CD14-positive monocyte (primary cell): ENCODE measurements at regions of chr12 and their contacts with region 1.

Region 1: GRCh38 chr12:124767066-124767821 is 96.4 kb downstream of the SCARB1 start:
- DNase-seq: peak; percentile 76 to 80 (median 79)
- H3K4me3 ChIP-seq: no peak overlapping the region
- H3K4me3 Mint-ChIP-seq: peak overlapping the region in 1 of 2 donors; percentile 12
- H3K27ac ChIP-seq: peak overlapping the region; percentile 77 to 82
- H3K27ac Mint-ChIP-seq: peak overlapping the region; percentile 80 to 95 (median 89)
- H3K4me1 ChIP-seq: peaks cover 78 to 81% of the 10 kb centered on the region in 2 donors
- H3K4me1 Mint-ChIP-seq: peaks cover 82% of the 10 kb centered on the region
- H3K27me3 ChIP-seq: no peaks in the 10 kb centered on the region
- H3K27me3 Mint-ChIP-seq: peaks cover 2 to 10% (median 5%) of the 10 kb centered on the region in 3 donors
- CTCF ChIP-seq: peak; percentile 100

Region 2: DNA sequence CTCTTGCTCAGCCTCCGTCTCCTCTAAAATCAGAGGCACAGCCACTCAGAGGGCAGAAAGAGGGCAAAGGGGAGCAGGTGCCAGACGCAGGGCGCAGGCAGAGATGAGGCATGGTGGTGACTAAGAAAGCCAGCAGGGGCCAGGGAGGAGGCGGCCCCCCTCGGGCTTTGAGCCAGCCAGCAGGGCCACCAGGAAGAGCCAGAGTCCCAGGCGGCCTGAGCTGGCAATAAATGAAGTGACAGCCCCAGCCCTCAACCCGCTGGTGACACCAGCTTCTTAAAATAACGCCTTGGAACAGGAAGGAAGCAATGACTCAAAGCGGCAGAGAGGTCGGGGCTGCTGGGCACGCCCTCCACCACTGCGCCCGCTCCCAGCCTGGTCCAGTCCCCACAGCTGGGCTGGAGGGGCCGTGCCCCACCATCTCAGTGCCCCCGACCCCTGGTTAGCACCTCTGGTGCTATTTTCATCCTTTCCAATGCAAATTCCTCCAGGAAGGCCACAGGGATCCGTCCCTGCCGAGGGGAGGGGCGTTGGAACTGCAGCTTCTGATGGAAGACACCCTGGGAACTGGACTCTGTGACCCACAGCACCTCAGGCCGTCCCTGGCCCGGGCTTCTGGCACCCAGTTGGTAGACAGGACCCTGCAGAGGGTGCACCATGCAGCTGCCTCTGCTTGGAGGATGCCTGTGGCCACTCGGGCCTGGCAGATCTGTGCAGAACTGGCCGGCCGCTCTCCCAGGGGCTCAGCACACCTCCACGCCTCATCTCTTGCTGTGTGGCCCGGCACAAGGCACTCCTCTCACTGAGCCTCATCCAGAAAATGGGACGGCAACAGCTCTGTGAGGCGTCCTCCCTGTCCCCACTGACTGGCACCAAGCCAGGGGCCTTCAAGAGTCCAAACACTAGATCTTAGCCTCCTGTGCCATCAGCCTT is 313.6 kb before region 1 on chr12:
- intact Hi-C with region 1: loop called in 1 of 2 experiments (anchors 5 kb)
- DNase-seq: peak; percentile 98 to 99 (median 99)
- H3K4me3 ChIP-seq: peak overlapping the region in 1 of 3 experiments; percentile 47
- H3K4me3 Mint-ChIP-seq: peak overlapping the region; percentile 65 to 67
- H3K27ac ChIP-seq: peak overlapping the region; percentile 73 to 85
- H3K27ac Mint-ChIP-seq: peak overlapping the region; percentile 78 to 95 (median 90)
- H3K4me1 ChIP-seq: peaks cover 64 to 67% of the 10 kb centered on the region in 2 donors
- H3K4me1 Mint-ChIP-seq: peaks cover 55% of the 10 kb centered on the region
- H3K27me3 ChIP-seq: no peaks in the 10 kb centered on the region
- H3K27me3 Mint-ChIP-seq: peaks cover 0 to 3% (median 3%) of the 10 kb centered on the region in 3 donors
- CTCF ChIP-seq: no peak

Region 3: DNA sequence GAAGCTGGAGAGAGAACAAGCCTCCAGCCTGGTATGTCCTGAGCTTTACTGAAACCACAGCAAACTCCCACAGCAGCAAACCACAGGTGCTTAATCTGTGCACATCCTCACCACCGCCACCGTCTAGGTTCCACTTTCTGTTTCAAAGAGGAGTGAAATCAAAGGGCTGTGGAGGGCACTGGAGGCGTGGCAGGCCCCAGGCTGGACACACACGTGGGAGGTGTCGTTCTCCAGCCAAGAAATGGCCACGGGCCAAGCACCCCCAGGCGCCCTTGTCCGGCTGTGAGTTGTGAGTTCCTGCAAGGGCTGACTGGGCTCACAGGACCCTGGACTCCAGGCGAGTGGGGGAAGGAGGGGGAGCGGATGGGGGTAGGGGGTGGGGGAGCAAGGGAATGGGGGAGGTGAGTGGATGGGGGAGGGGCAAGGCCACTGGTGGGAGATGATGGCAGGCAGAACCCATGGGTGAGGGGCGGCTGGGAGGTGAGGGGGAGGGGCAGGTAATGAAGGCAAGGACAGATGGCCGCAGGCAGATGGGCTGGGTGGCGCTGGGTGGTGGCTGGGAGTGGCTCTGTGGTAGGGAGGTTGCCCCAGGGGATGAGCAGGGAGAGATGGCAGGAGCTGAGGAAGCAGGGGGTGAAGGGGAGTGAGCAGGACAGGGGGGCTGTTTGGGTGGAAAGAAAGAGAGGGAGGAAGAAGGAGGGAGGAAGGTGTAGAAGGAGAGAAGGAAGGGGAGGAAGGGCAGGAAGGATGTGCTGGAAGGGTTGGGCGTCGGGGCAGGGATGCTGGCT is 286.6 kb before region 1 on chr12:
- intact Hi-C with region 1: no loop called
- DNase-seq: no peak
- H3K4me3 ChIP-seq: no peak overlapping the region
- H3K4me3 Mint-ChIP-seq: no peak overlapping the region
- H3K27ac ChIP-seq: no peak overlapping the region
- H3K27ac Mint-ChIP-seq: peak overlapping the region in 4 of 7 donors; percentile 8 to 54 (median 37)
- H3K4me1 ChIP-seq: no peaks in the 10 kb centered on the region
- H3K4me1 Mint-ChIP-seq: peaks cover 19% of the 10 kb centered on the region
- H3K27me3 ChIP-seq: no peaks in the 10 kb centered on the region
- H3K27me3 Mint-ChIP-seq: peaks cover 0 to 3% (median 1%) of the 10 kb centered on the region in 3 donors
- CTCF ChIP-seq: no peak

Region 4: DNA sequence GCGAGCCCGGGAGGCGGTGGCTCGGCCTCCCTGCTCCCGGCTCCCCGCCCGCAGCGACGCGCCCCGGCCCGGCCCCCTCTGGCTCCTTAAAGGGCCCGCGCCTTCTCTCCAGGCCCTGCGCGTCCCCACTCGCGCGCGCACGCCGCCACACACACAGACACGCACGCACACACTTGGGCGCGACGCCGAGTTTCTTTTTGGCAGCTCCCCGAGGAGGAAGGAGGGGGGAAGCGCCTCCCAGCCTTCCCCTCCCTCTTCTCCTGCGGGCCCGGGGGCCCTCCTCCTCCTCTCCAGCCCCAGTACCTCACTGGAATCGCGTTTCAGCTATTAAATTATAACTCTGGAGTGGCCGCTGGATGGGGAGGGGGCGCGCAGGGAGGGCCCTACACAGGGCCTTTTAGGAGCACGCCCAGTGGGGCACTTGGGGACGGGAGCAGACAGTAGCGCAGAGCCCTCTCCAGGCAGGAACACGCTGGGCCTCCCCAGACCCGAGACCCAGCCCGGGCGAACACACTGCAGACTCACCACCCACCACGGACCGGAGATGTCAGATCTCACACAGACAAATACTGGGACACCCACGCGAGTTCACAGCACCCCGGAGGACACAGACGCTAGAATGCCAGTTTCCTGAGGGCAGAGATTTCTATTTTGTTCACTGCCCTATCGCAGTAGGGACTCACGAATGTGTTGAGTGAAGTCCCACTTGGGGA is 199.4 kb before region 1 on chr12:
- intact Hi-C with region 1: loop called (anchors 2 to 5 kb)
- DNase-seq: peak; percentile 91 to 95 (median 95)
- H3K4me3 ChIP-seq: peak overlapping the region; percentile 14 to 74 (median 24)
- H3K4me3 Mint-ChIP-seq: peak overlapping the region; percentile 77 to 78
- H3K27ac ChIP-seq: peak overlapping the region; percentile 86 to 96
- H3K27ac Mint-ChIP-seq: peak overlapping the region; percentile 94 to 98 (median 96)
- H3K4me1 ChIP-seq: peaks cover 44 to 50% of the 10 kb centered on the region in 2 donors
- H3K4me1 Mint-ChIP-seq: peaks cover 47% of the 10 kb centered on the region
- H3K27me3 ChIP-seq: no peaks in the 10 kb centered on the region
- H3K27me3 Mint-ChIP-seq: no peaks in the 10 kb centered on the region
- CTCF ChIP-seq: no peak

Region 5: DNA sequence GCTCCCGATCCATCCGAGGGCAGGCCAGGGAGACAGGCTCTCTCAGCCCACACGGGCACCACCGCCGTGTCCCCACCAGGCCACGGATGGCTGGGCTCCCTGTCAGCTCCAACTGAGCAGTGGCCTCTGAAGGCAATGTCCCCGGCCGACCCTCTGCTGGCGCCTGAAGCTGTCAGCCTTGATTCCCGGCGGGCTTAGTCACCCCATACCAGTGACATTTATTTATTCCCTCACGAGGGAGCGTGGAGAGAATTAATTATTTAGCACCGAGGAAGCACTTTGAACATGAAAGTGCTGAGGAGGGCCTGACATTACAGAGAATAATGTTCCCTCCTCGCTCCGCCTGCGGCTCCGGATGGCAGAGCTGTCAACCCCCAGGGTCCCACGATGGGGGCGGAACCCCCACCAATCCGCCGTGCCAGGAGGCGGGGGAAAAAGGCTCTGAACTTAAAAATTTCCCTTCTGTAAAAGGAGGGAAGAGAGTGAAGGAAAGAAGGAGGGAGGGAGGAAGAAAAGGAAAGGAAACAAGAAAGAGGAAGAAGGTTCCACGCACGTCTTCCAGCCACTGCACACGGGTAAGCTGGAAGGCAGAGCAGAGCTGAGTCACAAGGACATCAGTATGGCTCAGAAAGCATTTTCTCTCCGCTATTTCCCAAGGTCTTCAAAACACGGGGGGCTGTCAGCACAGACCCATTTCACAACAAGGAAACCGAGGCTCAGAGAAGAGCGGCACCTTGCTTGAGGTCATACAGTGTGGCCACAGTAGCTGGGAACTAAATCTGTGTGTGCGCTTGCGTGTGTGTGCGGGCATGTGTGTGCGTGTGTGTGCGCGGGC is 91.1 kb before region 1 on chr12:
- intact Hi-C with region 1: loop called (anchors 2 to 5 kb)
- DNase-seq: peak; percentile 87 to 98 (median 97)
- H3K4me3 ChIP-seq: peak overlapping the region in 1 of 3 experiments; percentile 59
- H3K4me3 Mint-ChIP-seq: peak overlapping the region; percentile 68 to 86
- H3K27ac ChIP-seq: peak overlapping the region; percentile 70 to 90
- H3K27ac Mint-ChIP-seq: peak overlapping the region; percentile 92 to 96 (median 92)
- H3K4me1 ChIP-seq: peaks cover 36 to 39% of the 10 kb centered on the region in 2 donors
- H3K4me1 Mint-ChIP-seq: peaks cover 42% of the 10 kb centered on the region
- H3K27me3 ChIP-seq: no peaks in the 10 kb centered on the region
- H3K27me3 Mint-ChIP-seq: peaks cover 0 to 7% (median 3%) of the 10 kb centered on the region in 3 donors
- CTCF ChIP-seq: no peak

Region 6: GRCh38 chr12:124713436-124714082 is 53.7 kb before region 1 on chr12:
- intact Hi-C with region 1: loop called (anchors 1 to 5 kb)
- DNase-seq: peak; percentile 92 to 97 (median 95)
- H3K4me3 ChIP-seq: peak overlapping the region in 1 of 3 experiments; percentile 41
- H3K4me3 Mint-ChIP-seq: peak overlapping the region; percentile 71 to 89
- H3K27ac ChIP-seq: peak overlapping the region; percentile 95 to 100
- H3K27ac Mint-ChIP-seq: peak overlapping the region; percentile 99 to 100 (median 100)
- H3K4me1 ChIP-seq: peaks cover 57 to 69% of the 10 kb centered on the region in 2 donors
- H3K4me1 Mint-ChIP-seq: peaks cover 58% of the 10 kb centered on the region
- H3K27me3 ChIP-seq: no peaks in the 10 kb centered on the region
- H3K27me3 Mint-ChIP-seq: peaks cover 0 to 2% (median 0%) of the 10 kb centered on the region in 3 donors
- CTCF ChIP-seq: no peak

Region 7: GRCh38 chr12:124734224-124734788 is 32.9 kb before region 1 on chr12:
- intact Hi-C with region 1: loop called (anchors 5 kb)
- DNase-seq: peak; percentile 95 to 96 (median 95)
- H3K4me3 ChIP-seq: no peak overlapping the region
- H3K4me3 Mint-ChIP-seq: peak overlapping the region in 1 of 2 donors; percentile 48
- H3K27ac ChIP-seq: peak overlapping the region; percentile 88 to 94
- H3K27ac Mint-ChIP-seq: peak overlapping the region; percentile 97 to 99 (median 98)
- H3K4me1 ChIP-seq: peaks cover 53 to 69% of the 10 kb centered on the region in 2 donors
- H3K4me1 Mint-ChIP-seq: peaks cover 57% of the 10 kb centered on the region
- H3K27me3 ChIP-seq: no peaks in the 10 kb centered on the region
- H3K27me3 Mint-ChIP-seq: peaks cover 0 to 4% (median 2%) of the 10 kb centered on the region in 3 donors
- CTCF ChIP-seq: peak; percentile 24

Region 8: DNA sequence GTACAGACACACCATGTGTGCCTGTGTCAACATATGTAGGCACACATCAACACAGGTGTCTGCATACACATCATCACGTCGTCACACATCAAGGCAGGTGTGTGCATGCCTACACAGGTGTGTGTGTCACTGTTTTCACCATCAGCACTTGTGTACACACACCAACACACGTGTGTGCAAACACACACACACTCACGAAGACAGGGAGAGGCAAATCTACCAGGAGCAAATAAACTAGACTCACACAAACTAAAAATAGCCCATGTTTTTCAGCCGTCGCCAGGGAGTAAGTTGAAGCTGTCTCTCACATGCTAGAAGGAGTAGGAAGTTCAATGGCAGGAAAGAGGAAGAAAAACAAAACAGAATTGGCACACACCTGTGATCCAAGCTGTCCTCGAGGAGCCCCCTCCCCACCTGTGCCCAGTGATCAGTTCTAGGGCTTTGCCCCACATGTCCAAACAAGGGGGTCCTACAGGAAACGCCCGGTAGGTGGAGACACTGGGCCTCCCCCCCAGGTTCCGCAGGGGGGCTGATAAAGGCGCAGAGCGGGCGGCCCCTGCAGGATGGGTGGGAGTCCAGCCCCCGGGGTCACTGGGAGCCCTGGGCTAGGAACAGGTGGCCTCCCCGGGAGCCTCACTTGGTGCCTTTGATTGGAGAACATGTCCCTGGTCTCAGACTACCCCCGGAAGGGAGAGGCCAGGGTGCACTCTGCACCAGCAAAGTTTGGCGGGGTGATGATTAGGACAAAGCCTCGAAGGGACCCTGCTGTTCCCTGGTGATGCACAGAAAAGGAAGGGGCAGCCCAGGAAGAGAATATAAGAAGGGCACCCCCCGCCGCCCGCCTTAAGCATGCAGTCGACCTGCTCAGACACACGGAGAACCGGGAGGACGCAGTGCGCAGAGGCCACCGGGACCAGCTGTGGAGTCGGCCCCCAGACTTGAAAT is 89.3 kb after region 1 on chr12:
- intact Hi-C with region 1: no loop called
- DNase-seq: peak in 1 of 3 donors; percentile 9
- H3K4me3 ChIP-seq: peak overlapping the region in 1 of 3 experiments; percentile 15
- H3K4me3 Mint-ChIP-seq: peak overlapping the region in 1 of 2 donors; percentile 58
- H3K27ac ChIP-seq: peak overlapping the region in 1 of 2 donors; percentile 14
- H3K27ac Mint-ChIP-seq: peak overlapping the region in 3 of 7 donors; percentile 3 to 56 (median 41)
- H3K4me1 ChIP-seq: peaks cover 56 to 59% of the 10 kb centered on the region in 2 donors
- H3K4me1 Mint-ChIP-seq: peaks cover 57% of the 10 kb centered on the region
- H3K27me3 ChIP-seq: no peaks in the 10 kb centered on the region
- H3K27me3 Mint-ChIP-seq: peaks cover 0 to 1% (median 0%) of the 10 kb centered on the region in 3 donors
- CTCF ChIP-seq: peak; percentile 63

Region 9: GRCh38 chr12:124906606-124907261 is 139.5 kb after region 1 on chr12:
- intact Hi-C with region 1: loop called in 1 of 2 experiments (anchors 10 kb)
- DNase-seq: peak; percentile 82 to 93 (median 86)
- H3K4me3 ChIP-seq: no peak overlapping the region
- H3K4me3 Mint-ChIP-seq: no peak overlapping the region
- H3K27ac ChIP-seq: no peak overlapping the region
- H3K27ac Mint-ChIP-seq: peak overlapping the region in 1 of 7 donors; percentile 47
- H3K4me1 ChIP-seq: peaks cover 20 to 30% of the 10 kb centered on the region in 2 donors
- H3K4me1 Mint-ChIP-seq: peaks cover 38% of the 10 kb centered on the region
- H3K27me3 ChIP-seq: no peaks in the 10 kb centered on the region
- H3K27me3 Mint-ChIP-seq: peaks cover 0 to 2% (median 0%) of the 10 kb centered on the region in 3 donors
- CTCF ChIP-seq: peak; percentile 100